AG04449 (cell line): ENCODE measurements at regions of chr1 and their contacts with region 1.

Region 1: DNA sequence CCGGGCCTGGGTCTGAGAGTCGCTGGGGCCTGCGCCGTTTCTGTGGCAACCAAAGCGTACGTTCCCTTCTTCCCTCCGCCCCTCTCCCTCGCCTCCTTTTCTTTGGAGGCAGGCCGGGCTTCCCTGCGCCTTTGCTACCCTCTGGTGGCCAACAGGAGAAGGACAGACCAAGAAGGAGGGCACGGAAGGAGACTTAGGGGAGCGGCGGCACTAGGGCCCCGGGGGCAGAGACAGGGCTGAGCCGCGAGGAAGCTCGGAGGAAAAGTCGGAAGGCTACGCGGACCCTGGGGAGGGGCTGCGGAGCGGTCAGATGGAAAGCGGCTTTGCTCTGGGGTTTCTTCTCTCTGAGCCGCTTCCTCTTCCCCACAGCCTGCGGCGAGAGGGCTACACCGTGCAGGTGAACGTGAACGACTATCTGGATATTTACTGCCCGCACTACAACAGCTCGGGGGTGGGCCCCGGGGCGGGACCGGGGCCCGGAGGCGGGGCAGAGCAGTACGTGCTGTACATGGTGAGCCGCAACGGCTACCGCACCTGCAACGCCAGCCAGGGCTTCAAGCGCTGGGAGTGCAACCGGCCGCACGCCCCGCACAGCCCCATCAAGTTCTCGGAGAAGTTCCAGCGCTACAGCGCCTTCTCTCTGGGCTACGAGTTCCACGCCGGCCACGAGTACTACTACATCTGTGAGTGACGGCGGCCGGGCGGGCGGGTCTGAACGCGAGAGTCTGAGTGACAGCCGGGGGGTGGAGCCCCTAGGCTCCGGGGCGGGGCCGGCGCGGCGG is 6.3 kb downstream of the EFNA3 start:
- DNase-seq: peak; percentile 41
- H3K4me3 ChIP-seq: peak overlapping the region; percentile 89
- CTCF ChIP-seq: peak; percentile 97

Region 2: GRCh38 chr1:154558575-154559465 is 526.1 kb before region 1 on chr1 and contains the start of gene UBE2Q1:
- CTCF ChIA-PET with region 1: interaction called, 15 read pairs
- POLR2A ChIA-PET with region 1: no interaction called
- DNase-seq: peak; percentile 94
- H3K4me3 ChIP-seq: peak within 1 kb of the TSS; percentile 79
- CTCF ChIP-seq: no peak

Region 3: GRCh38 chr1:154837672-154838171 is 247.2 kb before region 1 on chr1:
- CTCF ChIA-PET with region 1: no interaction called
- POLR2A ChIA-PET with region 1: no interaction called
- DNase-seq: no peak
- H3K4me3 ChIP-seq: no peak overlapping the region
- CTCF ChIP-seq: no peak

Region 4: GRCh38 chr1:154911691-154912550 is 173.0 kb before region 1 on chr1:
- CTCF ChIA-PET with region 1: no interaction called
- POLR2A ChIA-PET with region 1: no interaction called
- DNase-seq: no peak
- H3K4me3 ChIP-seq: no peak overlapping the region
- CTCF ChIP-seq: no peak

Region 5: DNA sequence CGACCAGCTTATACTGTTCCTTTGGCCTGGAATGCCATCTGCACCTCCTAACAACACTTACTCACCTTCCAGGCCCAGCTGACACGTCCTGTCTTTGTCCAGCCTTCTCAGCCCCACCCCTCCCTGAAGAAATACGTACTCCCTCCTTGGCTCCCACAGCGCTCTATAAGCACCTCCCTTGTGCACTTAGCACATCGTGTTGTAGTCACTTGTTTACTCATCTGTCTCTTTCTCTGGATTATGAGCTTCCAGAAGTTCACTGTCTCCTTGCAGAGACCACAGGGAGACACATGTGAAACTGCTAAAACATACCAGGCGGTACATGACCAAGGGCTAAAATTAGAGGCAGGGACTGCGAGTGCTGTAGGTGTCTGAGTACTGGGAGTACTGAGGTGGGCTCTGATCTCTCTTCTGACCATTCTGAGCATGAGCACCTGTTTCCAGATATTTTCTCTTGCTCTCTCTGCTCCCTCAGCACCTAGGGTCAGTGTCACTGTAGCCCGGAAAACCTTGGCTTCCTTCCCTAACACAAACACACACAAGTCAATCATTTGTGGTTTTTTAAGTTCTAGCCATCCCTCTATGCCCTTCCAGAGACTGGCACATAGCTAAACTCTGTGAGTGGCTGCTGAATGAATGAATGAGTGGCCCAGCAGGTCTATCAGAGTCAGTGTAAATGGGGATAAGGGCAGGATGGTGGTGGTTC is 46.2 kb before region 1 on chr1:
- CTCF ChIA-PET with region 1: interaction called, 67 read pairs
- POLR2A ChIA-PET with region 1: interaction called, 6 read pairs
- DNase-seq: no peak
- H3K4me3 ChIP-seq: no peak overlapping the region
- CTCF ChIP-seq: no peak

Region 6: GRCh38 chr1:155050560-155051341 is 34.2 kb before region 1 on chr1 and contains the start of gene ADAM15:
- CTCF ChIA-PET with region 1: interaction called, 212 read pairs
- POLR2A ChIA-PET with region 1: no interaction called
- DNase-seq: no peak
- H3K4me3 ChIP-seq: peak within 1 kb of the TSS; percentile 71
- CTCF ChIP-seq: peak; percentile 92

Region 7: DNA sequence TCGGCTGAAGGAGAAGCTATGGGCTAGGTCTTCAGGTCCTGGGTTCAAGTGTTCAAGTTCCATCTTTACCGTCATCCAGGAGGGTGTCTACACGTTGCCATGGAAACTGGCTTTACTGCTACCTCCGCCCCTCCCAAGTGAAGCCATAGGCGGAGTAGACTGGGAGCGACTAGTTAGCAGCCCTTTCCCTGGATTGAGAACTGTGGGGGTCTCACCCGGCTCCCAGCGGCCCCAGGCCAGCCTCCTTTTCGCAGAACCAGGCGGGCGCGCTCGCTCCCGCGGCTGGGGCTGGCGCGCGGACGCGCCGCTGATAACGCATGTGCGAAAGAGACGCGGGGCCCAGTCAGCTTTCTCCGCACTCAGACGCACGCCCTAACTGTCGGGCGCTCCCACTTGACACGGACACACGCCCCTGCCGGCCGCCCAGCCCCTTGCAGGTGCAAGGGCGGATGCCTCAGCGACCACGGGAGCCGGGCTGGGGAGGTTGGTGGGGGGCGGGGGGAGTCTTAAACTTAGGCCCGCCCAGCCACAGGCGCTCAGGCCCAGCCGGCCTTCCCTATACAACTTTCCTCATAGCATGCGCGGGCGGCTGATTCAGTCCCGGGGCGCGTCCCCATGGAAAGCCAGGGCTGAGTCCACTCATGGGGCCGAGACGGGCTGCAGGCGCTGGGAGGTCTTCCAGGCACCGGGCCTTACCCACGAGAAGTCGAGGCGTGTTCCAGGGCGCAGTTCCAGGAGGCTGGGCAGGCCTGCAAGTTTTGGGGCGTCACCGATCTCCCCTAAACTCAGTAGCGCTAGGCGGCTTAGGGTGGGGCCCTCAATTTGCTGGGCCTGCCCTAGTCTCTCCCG is 14.0 kb before region 1 on chr1:
- CTCF ChIA-PET with region 1: interaction called, 212 read pairs
- POLR2A ChIA-PET with region 1: no interaction called
- DNase-seq: no peak
- H3K4me3 ChIP-seq: peak overlapping the region; percentile 44
- CTCF ChIP-seq: peak; percentile 46

Region 8: GRCh38 chr1:155172732-155173477 is 88.0 kb after region 1 on chr1 and contains the start of gene KRTCAP2:
- CTCF ChIA-PET with region 1: interaction called, 457 read pairs
- POLR2A ChIA-PET with region 1: interaction called, 5 read pairs
- DNase-seq: peak; percentile 75
- H3K4me3 ChIP-seq: peak within 1 kb of the TSS; percentile 98
- CTCF ChIP-seq: peak; percentile 96